Activated CD4-positive, alpha-beta T cell treated with anti-CD3 and anti-CD28 coated beads for 36 hours (primary cell): ENCODE measurements at regions of chr6 and their contacts with region 1.

Region 1: GRCh38 chr6:33317669-33318425 is at the start of gene ZBTB22:
- DNase-seq: peak; percentile 98
- ATAC-seq: peak; percentile 69
- H3K4me3 Mint-ChIP-seq: peak within 1 kb of the TSS; percentile 80
- H3K27ac Mint-ChIP-seq: peak within 1 kb of the TSS; percentile 93
- H3K4me1 Mint-ChIP-seq: peaks cover 70% of the 10 kb centered on the region
- H3K27me3 Mint-ChIP-seq: no peaks in the 10 kb centered on the region
- total RNA-seq, gene ZBTB22: 9.0 to 9.9 TPM

Region 2: GRCh38 chr6:31791324-31792089 is 1526.3 kb before region 1 on chr6:
- CTCF ChIA-PET with region 1: no interaction called
- POLR2A ChIA-PET with region 1: no interaction called
- intact Hi-C with region 1: no loop called
- DNase-seq: peak; percentile 64
- ATAC-seq: no peak
- H3K4me3 Mint-ChIP-seq: no peak overlapping the region
- H3K27ac Mint-ChIP-seq: no peak overlapping the region
- H3K4me1 Mint-ChIP-seq: peaks cover 34% of the 10 kb centered on the region
- H3K27me3 Mint-ChIP-seq: no peaks in the 10 kb centered on the region

Region 3: DNA sequence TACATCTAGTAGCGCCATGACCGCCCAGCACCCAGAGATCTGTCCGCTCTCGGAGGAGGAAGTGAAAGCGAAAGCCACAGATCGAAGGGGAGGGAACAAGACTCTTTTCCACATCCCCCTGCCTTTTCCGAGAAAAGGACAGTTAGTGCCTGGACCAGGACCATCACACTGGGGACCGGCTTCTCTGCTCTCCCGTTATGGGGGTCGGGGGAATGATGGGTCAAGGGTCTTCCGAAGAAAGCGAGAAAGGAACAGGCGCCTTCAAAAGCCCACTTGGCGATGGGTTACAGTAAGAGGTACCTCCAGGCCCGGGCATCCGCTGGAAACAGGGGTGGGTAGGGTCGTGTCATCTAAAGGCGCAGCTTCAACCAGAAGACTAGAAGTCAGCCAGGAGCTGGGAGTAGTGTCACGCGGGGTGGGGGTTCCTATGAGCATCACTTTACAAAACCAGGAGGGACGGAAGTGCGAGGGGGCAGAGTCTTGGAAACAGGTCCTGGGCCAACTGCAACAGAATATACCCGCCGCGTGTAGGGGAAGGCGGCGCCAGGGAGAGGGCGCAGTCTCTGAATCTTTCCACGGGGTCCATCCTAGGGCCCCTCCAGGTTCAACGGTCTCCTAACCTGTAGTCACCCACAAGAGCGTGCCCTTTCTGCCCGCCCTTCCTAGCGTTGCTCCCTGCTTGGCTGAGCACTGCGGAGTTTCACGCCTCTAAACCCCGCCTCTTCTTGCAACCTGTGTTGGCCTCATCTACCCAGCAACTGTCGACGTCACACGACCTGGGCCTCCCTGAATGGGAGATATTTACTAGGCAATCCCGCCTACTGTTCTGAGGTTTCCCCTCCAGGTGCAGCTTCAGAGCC is 473.6 kb before region 1 on chr6 and contains the start of gene PSMB8:
- CTCF ChIA-PET with region 1: no interaction called
- POLR2A ChIA-PET with region 1: interaction called, 4 read pairs
- intact Hi-C with region 1: loop called in 1 of 2 experiments (anchors 5 kb)
- DNase-seq: peak; percentile 99
- ATAC-seq: peak; percentile 73
- H3K4me3 Mint-ChIP-seq: peak within 1 kb of the TSS; percentile 95
- H3K27ac Mint-ChIP-seq: peak within 1 kb of the TSS; percentile 97
- H3K4me1 Mint-ChIP-seq: peaks cover 66% of the 10 kb centered on the region
- H3K27me3 Mint-ChIP-seq: no peaks in the 10 kb centered on the region
- total RNA-seq, gene PSMB8: 238 to 338 TPM

Region 4: GRCh38 chr6:33288921-33289748 is 28.7 kb before region 1 on chr6 and contains the starts of genes PFDN6 and WDR46:
- CTCF ChIA-PET with region 1: no interaction called
- POLR2A ChIA-PET with region 1: interaction called, 3 read pairs
- intact Hi-C with region 1: loop called (anchors 1 kb)
- DNase-seq: peak; percentile 87
- ATAC-seq: peak; percentile 98
- H3K4me3 Mint-ChIP-seq: peak within 1 kb of the TSS; percentile 98
- H3K27ac Mint-ChIP-seq: peak within 1 kb of the TSS; percentile 97
- H3K4me1 Mint-ChIP-seq: peaks cover 37% of the 10 kb centered on the region
- H3K27me3 Mint-ChIP-seq: no peaks in the 10 kb centered on the region
- total RNA-seq, gene PFDN6: 65.4 to 96.9 TPM
- total RNA-seq, gene WDR46: 63.5 to 69.4 TPM

Region 5: DNA sequence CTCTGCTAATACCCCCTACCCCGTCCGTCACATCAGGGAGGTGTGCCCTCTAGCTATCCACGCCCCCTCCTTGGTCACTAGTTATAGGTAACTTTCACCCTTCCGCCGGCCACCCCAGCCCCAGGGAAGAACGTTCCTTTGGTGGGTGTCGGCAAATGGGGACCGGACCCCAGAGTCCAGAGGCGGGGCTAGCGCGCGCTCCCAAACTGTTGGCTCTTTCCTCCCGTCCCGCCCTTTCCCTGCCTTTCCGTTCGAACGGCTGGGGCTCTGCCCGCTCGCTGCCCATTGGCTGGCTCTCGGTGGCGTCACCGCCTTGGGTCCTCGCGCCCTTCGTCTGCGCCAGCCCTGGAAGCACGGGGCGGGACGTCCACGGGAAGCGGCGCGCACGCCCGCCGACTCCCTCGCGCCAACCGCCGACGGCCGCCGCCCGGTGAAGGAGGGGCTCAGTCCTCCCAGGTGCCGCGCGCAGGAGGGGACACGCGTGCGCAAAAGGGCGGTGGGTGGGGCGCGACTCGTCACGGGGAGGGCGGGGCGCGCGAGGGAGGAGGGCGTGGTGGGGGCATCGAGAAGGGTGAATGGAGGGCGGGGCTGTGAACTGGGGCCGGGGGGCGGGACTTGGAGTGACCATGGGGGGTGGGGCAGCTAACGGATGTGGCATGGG is 92.3 kb after region 1 on chr6:
- CTCF ChIA-PET with region 1: no interaction called
- POLR2A ChIA-PET with region 1: no interaction called
- intact Hi-C with region 1: loop called in 1 of 2 experiments (anchors 1 kb)
- DNase-seq: peak; percentile 98
- ATAC-seq: peak; percentile 88
- H3K4me3 Mint-ChIP-seq: peak overlapping the region; percentile 80
- H3K27ac Mint-ChIP-seq: peak overlapping the region; percentile 96
- H3K4me1 Mint-ChIP-seq: peaks cover 31% of the 10 kb centered on the region
- H3K27me3 Mint-ChIP-seq: no peaks in the 10 kb centered on the region

Region 6: GRCh38 chr6:33579828-33580714 is 262.2 kb after region 1 on chr6 and contains the start of gene BAK1:
- CTCF ChIA-PET with region 1: no interaction called
- POLR2A ChIA-PET with region 1: no interaction called
- intact Hi-C with region 1: loop called in 1 of 2 experiments (anchors 10 kb)
- DNase-seq: peak; percentile 92
- ATAC-seq: peak; percentile 95
- H3K4me3 Mint-ChIP-seq: peak within 1 kb of the TSS; percentile 95
- H3K27ac Mint-ChIP-seq: peak within 1 kb of the TSS; percentile 98
- H3K4me1 Mint-ChIP-seq: peaks cover 31% of the 10 kb centered on the region
- H3K27me3 Mint-ChIP-seq: no peaks in the 10 kb centered on the region
- total RNA-seq, gene BAK1: 37.0 to 43.3 TPM